ENCODE measurements at regions of chr2 and their contacts with region 1.

Region 1: DNA sequence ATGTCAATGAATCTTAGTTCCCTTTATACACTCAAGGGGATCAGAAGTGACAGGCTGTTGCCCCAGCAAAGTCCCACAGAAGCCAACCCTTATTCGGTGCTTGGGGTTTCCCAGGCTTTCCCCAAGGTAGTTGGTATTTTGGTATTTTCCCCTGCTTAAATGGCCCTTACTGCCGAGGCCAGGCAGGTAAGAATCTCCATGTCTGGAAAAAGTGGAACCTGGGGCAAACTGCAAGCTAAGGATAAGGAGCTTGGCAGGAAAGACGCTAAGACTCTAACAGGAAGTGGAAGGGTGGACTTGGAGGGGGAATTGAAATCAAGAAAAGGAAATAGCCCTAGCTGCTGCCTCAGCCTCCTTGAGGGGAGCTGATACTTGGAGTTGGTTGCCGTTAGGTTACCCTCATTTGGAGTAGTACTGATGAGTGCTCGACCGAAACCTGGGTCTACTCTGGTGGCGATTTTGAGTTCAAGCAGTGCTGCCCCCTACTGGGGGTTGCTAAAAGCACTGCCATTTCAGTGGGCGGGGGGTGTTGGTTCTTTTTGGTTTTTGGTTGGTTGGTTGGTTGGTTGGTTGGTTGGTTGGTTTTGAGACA is 3.3 kb upstream of the GPBAR1 start:
- DNase-seq: peak; percentile 93
- ATAC-seq: peak; percentile 90
- H3K4me3 ChIP-seq: no peak overlapping the region
- H3K4me3 Mint-ChIP-seq: peak overlapping the region; percentile 86
- H3K27ac ChIP-seq: peak overlapping the region; percentile 61 to 85
- H3K27ac Mint-ChIP-seq: peak overlapping the region; percentile 98
- H3K4me1 ChIP-seq: peaks cover 48 to 57% of the 10 kb centered on the region in 2 donors
- H3K4me1 Mint-ChIP-seq: peaks cover 53% of the 10 kb centered on the region
- H3K27me3 ChIP-seq: no peaks in the 10 kb centered on the region
- H3K27me3 Mint-ChIP-seq: no peaks in the 10 kb centered on the region
- CTCF ChIP-seq: peak; percentile 67

Region 2: DNA sequence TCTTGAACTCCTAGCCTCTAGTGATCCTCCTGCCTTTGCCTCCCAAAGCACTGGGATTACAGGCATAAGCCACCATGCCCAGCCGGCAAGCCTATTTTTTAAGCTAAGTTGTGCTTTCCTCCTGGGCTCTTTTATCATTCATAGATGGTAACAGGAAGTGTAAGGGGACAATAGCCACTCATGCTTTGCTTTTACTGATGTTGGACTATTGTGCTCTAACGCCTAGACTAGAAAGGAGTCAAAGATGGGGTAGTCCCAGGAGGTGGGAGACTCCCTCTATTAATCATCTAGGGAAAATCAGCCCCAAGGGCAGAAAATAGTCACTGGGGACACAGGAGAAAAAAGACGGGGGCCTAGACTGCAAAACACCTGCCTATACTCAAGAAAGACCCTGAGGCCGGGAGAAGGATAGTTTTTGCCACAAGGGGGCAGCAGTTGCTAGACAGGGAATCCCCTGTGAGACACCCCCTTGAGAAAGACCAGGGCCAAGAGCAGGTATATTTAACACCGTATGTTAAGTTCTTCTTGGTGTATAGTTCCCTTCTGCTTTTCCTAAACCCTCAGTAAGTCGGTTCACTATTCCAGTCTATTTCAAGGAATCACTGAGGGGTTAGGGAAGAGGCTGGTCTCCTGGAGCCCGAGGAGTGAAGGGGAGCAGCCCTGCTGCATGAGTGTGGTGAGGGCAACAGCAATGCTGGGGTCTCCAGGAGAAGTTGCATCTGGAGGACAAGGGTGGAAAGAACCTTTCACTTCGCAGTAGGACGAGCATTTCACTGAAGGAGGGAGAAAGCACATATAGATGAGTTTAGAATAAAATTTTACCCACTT is 88.6 kb before region 1 on chr2:
- CTCF ChIA-PET with region 1: interaction called, 5 read pairs
- POLR2A ChIA-PET with region 1: no interaction called
- intact Hi-C with region 1: loop called (anchors 1 kb)
- DNase-seq: peak; percentile 79
- ATAC-seq: peak; percentile 70
- H3K4me3 ChIP-seq: no peak overlapping the region
- H3K4me3 Mint-ChIP-seq: no peak overlapping the region
- H3K27ac ChIP-seq: no peak overlapping the region
- H3K27ac Mint-ChIP-seq: no peak overlapping the region
- H3K4me1 ChIP-seq: peaks cover 13 to 21% of the 10 kb centered on the region in 2 donors
- H3K4me1 Mint-ChIP-seq: peaks cover 24% of the 10 kb centered on the region
- H3K27me3 ChIP-seq: peaks cover 0 to 9% (median 0%) of the 10 kb centered on the region in 4 experiments
- H3K27me3 Mint-ChIP-seq: peaks cover 19% of the 10 kb centered on the region
- CTCF ChIP-seq: peak; percentile 81

Region 3: GRCh38 chr2:218186355-218186766 is 71.1 kb before region 1 on chr2:
- CTCF ChIA-PET with region 1: interaction called, 8 read pairs
- POLR2A ChIA-PET with region 1: no interaction called
- intact Hi-C with region 1: loop called (anchors 1 kb)
- DNase-seq: peak; percentile 82
- ATAC-seq: peak; percentile 91
- H3K4me3 ChIP-seq: no peak overlapping the region
- H3K4me3 Mint-ChIP-seq: no peak overlapping the region
- H3K27ac ChIP-seq: no peak overlapping the region
- H3K27ac Mint-ChIP-seq: peak overlapping the region; percentile 26
- H3K4me1 ChIP-seq: peaks cover 2 to 7% of the 10 kb centered on the region in 2 donors
- H3K4me1 Mint-ChIP-seq: peaks cover 6% of the 10 kb centered on the region
- H3K27me3 ChIP-seq: peaks cover 0 to 8% (median 2%) of the 10 kb centered on the region in 4 experiments
- H3K27me3 Mint-ChIP-seq: peaks cover 7% of the 10 kb centered on the region
- CTCF ChIP-seq: peak; percentile 88

Region 4: GRCh38 chr2:218216674-218217359 is 40.7 kb before region 1 on chr2 and contains the start of gene ARPC2:
- CTCF ChIA-PET with region 1: interaction called, 10 read pairs
- POLR2A ChIA-PET with region 1: interaction called, 4 read pairs
- intact Hi-C with region 1: loop called (anchors 1 kb)
- DNase-seq: peak; percentile 98
- ATAC-seq: peak; percentile 74
- H3K4me3 ChIP-seq: peak within 1 kb of the TSS; percentile 93 to 99 (median 97)
- H3K4me3 Mint-ChIP-seq: peak within 1 kb of the TSS; percentile 90
- H3K27ac ChIP-seq: peak within 1 kb of the TSS; percentile 95 to 99
- H3K27ac Mint-ChIP-seq: peak within 1 kb of the TSS; percentile 94
- H3K4me1 ChIP-seq: peaks cover 36 to 45% of the 10 kb centered on the region in 2 donors
- H3K4me1 Mint-ChIP-seq: peaks cover 43% of the 10 kb centered on the region
- H3K27me3 ChIP-seq: no peaks in the 10 kb centered on the region
- H3K27me3 Mint-ChIP-seq: no peaks in the 10 kb centered on the region
- CTCF ChIP-seq: no peak
- total RNA-seq, gene ARPC2: 343 and 352 TPM in 2 replicates

Region 5: DNA sequence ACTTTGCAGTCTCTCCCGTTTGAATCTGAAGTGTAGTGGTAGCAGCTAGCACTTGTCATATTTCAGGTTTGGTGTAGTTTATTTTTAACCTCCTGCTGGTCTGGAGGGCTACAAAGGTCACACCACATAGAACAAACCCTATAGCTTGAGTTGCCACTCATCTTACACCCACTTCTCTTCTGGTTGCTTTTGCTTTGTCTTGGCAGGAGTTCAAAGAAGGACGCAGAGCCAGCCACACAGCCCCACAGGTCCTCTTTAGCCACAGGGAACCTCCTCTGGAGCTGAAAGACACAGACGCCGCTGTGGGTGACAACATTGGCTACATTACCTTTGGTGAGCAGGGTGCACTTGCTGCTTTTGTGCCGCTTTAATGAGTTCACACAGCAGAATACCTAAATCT is 12.3 kb before region 1 on chr2:
- CTCF ChIA-PET with region 1: interaction called, 15 read pairs
- POLR2A ChIA-PET with region 1: no interaction called
- intact Hi-C with region 1: no loop called
- DNase-seq: no peak
- ATAC-seq: no peak
- H3K4me3 ChIP-seq: no peak overlapping the region
- H3K4me3 Mint-ChIP-seq: no peak overlapping the region
- H3K27ac ChIP-seq: no peak overlapping the region
- H3K27ac Mint-ChIP-seq: no peak overlapping the region
- H3K4me1 ChIP-seq: no peaks in the 10 kb centered on the region
- H3K4me1 Mint-ChIP-seq: no peaks in the 10 kb centered on the region
- H3K27me3 ChIP-seq: no peaks in the 10 kb centered on the region
- H3K27me3 Mint-ChIP-seq: no peaks in the 10 kb centered on the region
- CTCF ChIP-seq: no peak

Region 6: GRCh38 chr2:218292048-218293014 is 34.8 kb after region 1 on chr2 and contains the start of gene TMBIM1:
- CTCF ChIA-PET with region 1: interaction called, 7 read pairs
- POLR2A ChIA-PET with region 1: interaction called, 3 read pairs
- intact Hi-C with region 1: loop called (anchors 1 kb)
- DNase-seq: peak; percentile 90
- ATAC-seq: peak; percentile 72
- H3K4me3 ChIP-seq: peak within 1 kb of the TSS; percentile 50 to 95 (median 87)
- H3K4me3 Mint-ChIP-seq: peak within 1 kb of the TSS; percentile 89
- H3K27ac ChIP-seq: peak within 1 kb of the TSS; percentile 92 to 98
- H3K27ac Mint-ChIP-seq: peak within 1 kb of the TSS; percentile 93
- H3K4me1 ChIP-seq: peaks cover 57 to 71% of the 10 kb centered on the region in 2 donors
- H3K4me1 Mint-ChIP-seq: peaks cover 60% of the 10 kb centered on the region
- H3K27me3 ChIP-seq: no peaks in the 10 kb centered on the region
- H3K27me3 Mint-ChIP-seq: no peaks in the 10 kb centered on the region
- CTCF ChIP-seq: peak; percentile 90
- total RNA-seq, gene TMBIM1: 128 and 137 TPM in 2 replicates